ENCODE measurements at regions of chr7 and their contacts with region 1.

Region 1: DNA sequence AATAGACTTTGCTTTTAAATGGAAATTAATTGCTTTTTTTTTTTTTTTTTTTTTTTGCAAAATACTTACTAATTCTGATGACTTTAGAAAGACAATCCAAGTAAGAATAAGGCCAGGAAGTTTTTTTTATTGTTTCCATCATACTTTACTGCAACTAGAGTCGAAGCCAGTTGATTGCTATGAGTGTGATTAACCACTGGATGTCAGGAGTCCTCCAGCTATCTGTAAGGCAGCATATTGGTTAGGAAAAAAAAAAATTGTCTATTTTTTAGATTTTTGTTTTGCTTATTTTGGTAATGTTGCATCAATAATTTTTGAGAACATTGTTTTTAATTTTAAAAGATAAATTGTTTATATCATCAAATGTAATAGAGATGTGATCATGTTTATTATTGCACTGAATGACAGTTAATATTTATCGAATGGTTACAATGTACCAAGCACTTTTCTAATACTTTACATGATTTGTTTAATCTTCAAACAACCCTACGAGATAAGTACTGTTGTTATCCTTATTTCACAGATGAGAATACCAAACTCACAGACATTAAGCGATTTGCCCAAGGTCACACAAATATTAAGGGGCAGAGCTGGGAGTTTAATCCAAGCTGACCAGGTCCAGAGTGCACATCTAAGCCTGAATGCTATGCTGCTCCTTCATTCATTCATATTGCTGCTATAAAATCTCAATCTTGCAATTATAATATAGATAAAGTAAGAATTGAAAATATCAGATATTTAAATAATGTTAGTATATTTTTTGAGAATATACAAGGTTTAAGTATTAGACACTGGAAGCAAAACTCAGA is 19.9 kb upstream of the LMOD2 start:
- DNase-seq: no peak
- ATAC-seq: no peak
- H3K4me3 Mint-ChIP-seq: no peak overlapping the region
- H3K27ac Mint-ChIP-seq: no peak overlapping the region
- H3K4me1 Mint-ChIP-seq: no peaks in the 10 kb centered on the region
- H3K27me3 Mint-ChIP-seq: peaks cover 25% of the 10 kb centered on the region
- CTCF ChIP-seq: peak; percentile 26

Region 2: GRCh38 chr7:123624527-123625183 is 11.1 kb before region 1 on chr7:
- CTCF ChIA-PET with region 1: interaction called, 14 read pairs
- POLR2A ChIA-PET with region 1: no interaction called
- intact Hi-C with region 1: no loop called
- DNase-seq: peak; percentile 87
- ATAC-seq: peak; percentile 86
- H3K4me3 Mint-ChIP-seq: no peak overlapping the region
- H3K27ac Mint-ChIP-seq: no peak overlapping the region
- H3K4me1 Mint-ChIP-seq: peaks cover 2% of the 10 kb centered on the region
- H3K27me3 Mint-ChIP-seq: peaks cover 9% of the 10 kb centered on the region
- CTCF ChIP-seq: peak; percentile 66